Cardiac septum (tissue), 1 donor: ENCODE measurements at regions of chr11 and their contacts with region 1.

Region 1: DNA sequence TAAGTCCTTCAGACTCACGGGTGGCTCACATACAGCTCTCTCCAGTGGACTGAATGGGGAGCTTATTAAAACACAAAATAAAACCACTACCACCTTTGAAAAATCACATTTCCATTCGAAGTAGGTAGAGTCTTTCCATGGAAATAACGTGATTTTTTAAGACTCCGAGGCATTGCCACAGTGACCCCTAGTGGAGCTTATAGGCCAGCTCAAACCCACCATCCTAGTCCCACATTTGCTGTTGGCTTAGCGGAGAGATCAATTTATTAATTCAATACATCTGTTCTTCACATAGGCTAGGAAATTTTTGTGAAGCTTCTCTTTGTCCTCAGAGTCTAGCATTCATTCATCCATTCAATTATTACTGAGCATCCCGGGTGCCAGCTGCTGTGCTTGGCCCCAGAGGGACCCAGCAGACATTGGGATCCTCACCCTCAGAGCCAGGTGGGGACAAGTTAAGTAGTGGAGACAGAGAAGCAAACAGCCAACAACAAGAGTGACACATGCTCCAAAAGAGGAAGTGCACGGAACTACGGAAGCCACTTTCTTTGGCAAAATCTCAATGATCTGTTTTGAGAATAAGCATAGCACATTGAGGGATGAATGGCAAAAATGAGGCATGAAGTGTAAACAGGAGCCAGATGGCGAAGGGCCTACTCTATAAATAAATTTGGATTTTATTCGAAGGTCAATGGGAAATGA is 10.2 kb upstream of the P4HA3 start:
- DNase-seq: no peak

Region 2: DNA sequence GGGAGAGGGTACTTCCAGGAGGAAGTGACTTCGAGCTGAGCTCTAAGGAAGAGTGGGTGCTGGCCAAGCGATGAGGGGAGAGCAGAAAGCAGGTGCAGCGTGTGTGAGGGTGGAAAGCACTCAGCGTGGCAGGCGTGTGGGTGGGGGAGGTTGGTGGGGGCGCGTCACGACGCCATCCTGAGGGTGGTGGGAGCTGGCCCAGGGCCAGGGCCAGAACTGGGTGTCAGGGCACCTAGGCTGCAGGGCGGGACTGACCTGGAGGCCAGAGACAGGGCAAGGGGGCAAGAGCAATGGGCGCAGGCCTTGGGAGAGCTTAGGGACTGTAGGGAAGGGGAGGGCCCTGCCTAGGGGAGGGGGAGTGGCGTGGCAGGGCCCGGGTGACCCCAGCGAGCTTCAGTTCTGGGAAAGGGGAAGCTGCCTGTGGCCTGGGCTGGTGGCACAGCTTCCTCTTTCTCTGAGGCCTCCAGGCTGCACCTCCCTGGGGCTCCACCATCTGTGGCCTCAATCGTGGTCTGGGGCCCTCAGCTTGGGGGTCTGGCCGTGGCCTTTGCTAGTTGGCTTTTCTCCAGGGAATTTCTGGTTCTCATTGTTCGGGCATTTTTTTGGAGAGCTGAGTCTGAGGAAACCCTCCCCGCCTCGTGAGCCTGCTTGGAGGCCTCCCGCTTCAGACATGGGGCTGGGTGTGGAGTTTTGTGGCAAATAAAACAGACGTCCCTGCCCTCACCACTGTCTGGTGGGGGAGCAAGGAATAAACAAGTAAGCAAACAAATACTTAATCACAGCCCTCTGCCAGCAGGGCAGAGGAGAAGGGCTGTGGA is 936.6 kb before region 1 on chr11:
- intact Hi-C with region 1: no loop called
- DNase-seq: peak; percentile 95

Region 3: GRCh38 chr11:73965076-73965860 is 356.4 kb before region 1 on chr11:
- intact Hi-C with region 1: loop called (anchors 10 kb)
- DNase-seq: peak; percentile 43

Region 4: DNA sequence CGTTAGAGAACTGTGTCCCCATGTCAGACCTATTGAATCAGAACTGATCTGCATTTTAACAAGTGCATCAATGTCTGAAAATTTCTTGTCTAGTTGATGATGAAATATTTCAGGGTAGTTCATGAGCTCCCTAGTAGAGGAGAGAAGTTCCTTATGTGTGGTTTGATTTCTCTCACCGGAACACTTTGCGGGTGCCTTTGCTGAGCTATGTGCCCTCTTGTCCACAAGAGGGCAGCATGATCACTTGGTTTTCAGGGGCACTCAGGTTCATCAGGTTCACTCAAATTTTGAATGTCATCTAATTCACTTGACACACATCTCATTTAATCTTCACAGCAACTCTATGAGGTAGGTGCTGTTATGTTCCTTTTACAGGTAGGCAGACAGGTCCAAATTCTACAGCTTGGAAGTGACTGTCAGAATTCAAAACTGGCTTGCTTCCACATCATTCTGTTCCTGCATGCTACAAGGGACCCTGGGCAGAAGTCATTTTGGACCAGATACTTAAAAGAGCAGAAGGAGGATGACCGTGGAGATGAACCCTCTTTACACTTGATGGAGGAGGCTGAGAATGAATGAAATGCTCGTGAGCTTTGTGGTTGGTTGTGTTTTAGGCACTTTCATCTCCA is 65.8 kb before region 1 on chr11:
- intact Hi-C with region 1: loop called (anchors 10 kb)
- DNase-seq: no peak

Region 5: GRCh38 chr11:74398244-74399159 is 76.9 kb after region 1 on chr11 and contains the start of gene PGM2L1:
- intact Hi-C with region 1: loop called (anchors 10 kb)
- DNase-seq: peak; percentile 96
- total RNA-seq, gene PGM2L1: 1.8 TPM

Region 6: DNA sequence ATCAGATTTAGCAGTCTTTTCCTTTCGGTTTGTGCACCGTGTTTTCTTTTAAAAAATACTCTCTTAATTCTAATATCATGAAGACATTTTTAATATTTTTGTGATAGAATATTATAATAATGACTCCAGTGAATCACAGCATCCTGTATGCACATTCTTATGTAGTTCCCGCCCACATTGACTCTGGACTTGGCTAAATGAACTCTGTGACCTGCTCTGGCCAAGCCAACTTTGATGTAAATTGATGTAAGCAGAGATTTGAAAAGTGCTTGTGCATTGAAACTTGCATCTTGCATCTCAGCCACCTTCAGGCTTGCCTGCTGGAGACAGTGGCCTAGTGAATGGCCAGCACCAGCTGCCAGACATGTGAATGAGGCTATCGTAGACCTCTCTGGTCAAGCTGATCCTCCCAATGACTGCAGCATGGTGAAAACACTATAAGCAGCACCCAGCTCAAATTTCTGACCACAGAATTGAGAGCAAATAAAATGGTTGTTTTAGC is 105.8 kb after region 1 on chr11:
- intact Hi-C with region 1: no loop called
- DNase-seq: no peak